ENCODE measurements at regions of chr1 and their contacts with region 1.

Region 1: DNA sequence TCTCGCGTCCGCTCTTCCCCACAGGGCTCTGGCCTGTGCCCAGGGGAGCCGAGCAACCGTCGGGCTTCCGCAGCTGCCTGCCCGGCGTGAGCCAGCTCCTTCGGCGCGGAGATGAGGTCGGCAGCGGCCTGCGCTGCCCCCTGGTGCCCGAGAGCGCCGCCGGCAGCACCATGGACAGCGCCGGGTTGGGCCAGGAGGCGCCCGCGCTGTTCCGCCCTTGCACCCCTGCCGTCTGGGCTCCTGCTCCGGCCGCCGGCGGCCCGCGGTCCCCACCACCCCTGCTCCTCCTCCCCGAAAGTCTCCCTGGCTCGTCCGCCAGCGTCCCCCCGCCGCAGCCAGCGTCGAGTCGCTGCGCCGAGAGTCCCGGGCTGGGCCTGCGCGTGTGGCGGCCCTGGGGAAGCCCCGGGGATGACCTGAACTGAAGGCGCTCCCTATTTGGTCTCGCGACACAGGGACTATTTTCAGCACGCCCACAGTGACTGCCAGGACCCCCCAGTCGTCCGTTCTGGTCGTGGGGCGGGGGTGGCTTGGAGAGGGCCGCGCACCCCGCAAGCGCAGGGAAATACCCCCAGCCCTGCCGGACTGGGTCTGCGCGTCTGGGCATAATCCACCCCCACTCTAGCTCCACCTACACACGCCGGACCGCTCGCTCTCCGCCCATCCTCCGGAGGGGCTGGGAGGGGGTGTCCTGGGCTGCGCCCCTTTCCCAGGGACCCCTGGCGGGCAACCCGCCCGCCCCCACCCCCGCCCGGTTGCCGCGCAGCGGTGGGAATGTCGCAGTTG is 1.3 kb downstream of the HES3 start:
- DNase-seq: peak; percentile 85
- H3K4me3 Mint-ChIP-seq: no peak overlapping the region
- H3K27ac Mint-ChIP-seq: no peak overlapping the region
- H3K4me1 Mint-ChIP-seq: no peaks in the 10 kb centered on the region
- H3K27me3 Mint-ChIP-seq: peaks cover 61% of the 10 kb centered on the region
- CTCF ChIP-seq: peak; percentile 81

Region 2: GRCh38 chr1:5779598-5780323 is 465.5 kb before region 1 on chr1:
- CTCF ChIA-PET with region 1: no interaction called
- intact Hi-C with region 1: no loop called
- DNase-seq: no peak
- H3K4me3 Mint-ChIP-seq: no peak overlapping the region
- H3K27ac Mint-ChIP-seq: no peak overlapping the region
- H3K4me1 Mint-ChIP-seq: no peaks in the 10 kb centered on the region
- H3K27me3 Mint-ChIP-seq: peaks cover 8% of the 10 kb centered on the region
- CTCF ChIP-seq: no peak

Region 3: GRCh38 chr1:6052543-6053205 is 192.6 kb before region 1 on chr1:
- CTCF ChIA-PET with region 1: interaction called, 16 read pairs
- intact Hi-C with region 1: loop called (anchors 2 kb)
- DNase-seq: peak; percentile 54
- H3K4me3 Mint-ChIP-seq: no peak overlapping the region
- H3K27ac Mint-ChIP-seq: no peak overlapping the region
- H3K4me1 Mint-ChIP-seq: peaks cover 7% of the 10 kb centered on the region
- H3K27me3 Mint-ChIP-seq: peaks cover 34% of the 10 kb centered on the region
- CTCF ChIP-seq: peak; percentile 36

Region 4: DNA sequence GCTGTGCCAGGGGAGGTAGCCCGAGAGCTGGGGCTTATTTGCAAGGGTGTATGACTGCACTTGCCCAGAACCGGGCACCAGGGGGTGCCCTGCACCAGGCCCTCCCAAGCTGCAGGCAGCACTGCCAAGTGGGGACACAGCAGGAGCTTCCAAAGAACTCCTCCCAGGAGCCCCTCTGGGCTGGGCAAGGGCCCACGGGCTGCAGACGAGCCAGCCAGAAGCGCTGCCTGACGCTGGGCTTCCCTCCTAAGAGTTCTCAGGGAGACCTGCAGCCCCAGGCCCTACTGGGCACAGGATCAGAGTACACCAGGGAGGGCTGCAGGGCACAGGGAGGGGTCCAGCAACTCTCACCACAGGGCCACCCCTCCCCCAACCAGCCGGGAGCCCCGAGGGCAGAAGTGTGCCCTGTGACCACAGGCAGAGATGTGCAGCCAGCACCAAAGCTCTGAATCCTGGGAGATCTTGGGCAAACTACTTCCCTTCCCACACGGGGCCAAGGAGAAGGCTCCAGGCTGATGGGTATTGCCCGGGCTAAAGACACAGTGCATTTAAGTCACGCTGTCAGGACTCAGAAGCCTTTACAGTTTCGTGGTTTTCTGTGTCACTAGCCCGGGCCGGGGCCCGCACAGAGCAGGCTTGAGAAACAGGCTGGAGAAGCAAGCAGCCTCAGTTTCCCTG is 136.2 kb before region 1 on chr1:
- CTCF ChIA-PET with region 1: interaction called, 18 read pairs
- intact Hi-C with region 1: loop called (anchors 2 kb)
- DNase-seq: peak; percentile 66
- H3K4me3 Mint-ChIP-seq: no peak overlapping the region
- H3K27ac Mint-ChIP-seq: no peak overlapping the region
- H3K4me1 Mint-ChIP-seq: no peaks in the 10 kb centered on the region
- H3K27me3 Mint-ChIP-seq: peaks cover 70% of the 10 kb centered on the region
- CTCF ChIP-seq: no peak

Region 5: GRCh38 chr1:6205849-6206519 is 39.3 kb before region 1 on chr1 and contains the start of gene RNF207:
- CTCF ChIA-PET with region 1: interaction called, 19 read pairs
- intact Hi-C with region 1: no loop called
- DNase-seq: peak; percentile 89
- H3K4me3 Mint-ChIP-seq: peak within 1 kb of the TSS; percentile 81
- H3K27ac Mint-ChIP-seq: no peak within 1 kb of the TSS
- H3K4me1 Mint-ChIP-seq: no peaks in the 10 kb centered on the region
- H3K27me3 Mint-ChIP-seq: no peaks in the 10 kb centered on the region
- CTCF ChIP-seq: no peak
- total RNA-seq, gene RNF207: 146 and 160 TPM in 2 replicates

Region 6: GRCh38 chr1:6343506-6344405 is 98.5 kb after region 1 on chr1:
- CTCF ChIA-PET with region 1: no interaction called
- intact Hi-C with region 1: loop called (anchors 1 kb)
- DNase-seq: peak; percentile 79
- H3K4me3 Mint-ChIP-seq: no peak overlapping the region
- H3K27ac Mint-ChIP-seq: peak overlapping the region; percentile 63
- H3K4me1 Mint-ChIP-seq: peaks cover 13% of the 10 kb centered on the region
- H3K27me3 Mint-ChIP-seq: no peaks in the 10 kb centered on the region
- CTCF ChIP-seq: peak; percentile 74

Region 7: GRCh38 chr1:6401673-6402072 is 156.4 kb after region 1 on chr1:
- CTCF ChIA-PET with region 1: interaction called, 4 read pairs
- intact Hi-C with region 1: loop called (anchors 10 kb)
- DNase-seq: no peak
- H3K4me3 Mint-ChIP-seq: no peak overlapping the region
- H3K27ac Mint-ChIP-seq: no peak overlapping the region
- H3K4me1 Mint-ChIP-seq: no peaks in the 10 kb centered on the region
- H3K27me3 Mint-ChIP-seq: peaks cover 23% of the 10 kb centered on the region
- CTCF ChIP-seq: no peak

Region 8: GRCh38 chr1:6438047-6438525 is 192.8 kb after region 1 on chr1:
- CTCF ChIA-PET with region 1: interaction called, 4 read pairs
- intact Hi-C with region 1: loop called (anchors 5 kb)
- DNase-seq: peak; percentile 77
- H3K4me3 Mint-ChIP-seq: no peak overlapping the region
- H3K27ac Mint-ChIP-seq: no peak overlapping the region
- H3K4me1 Mint-ChIP-seq: no peaks in the 10 kb centered on the region
- H3K27me3 Mint-ChIP-seq: peaks cover 43% of the 10 kb centered on the region
- CTCF ChIP-seq: peak; percentile 86